Naive thymus-derived CD4-positive, alpha-beta T cell (primary cell): ENCODE measurements at regions of chr10 and their contacts with region 1.

Region 1: DNA sequence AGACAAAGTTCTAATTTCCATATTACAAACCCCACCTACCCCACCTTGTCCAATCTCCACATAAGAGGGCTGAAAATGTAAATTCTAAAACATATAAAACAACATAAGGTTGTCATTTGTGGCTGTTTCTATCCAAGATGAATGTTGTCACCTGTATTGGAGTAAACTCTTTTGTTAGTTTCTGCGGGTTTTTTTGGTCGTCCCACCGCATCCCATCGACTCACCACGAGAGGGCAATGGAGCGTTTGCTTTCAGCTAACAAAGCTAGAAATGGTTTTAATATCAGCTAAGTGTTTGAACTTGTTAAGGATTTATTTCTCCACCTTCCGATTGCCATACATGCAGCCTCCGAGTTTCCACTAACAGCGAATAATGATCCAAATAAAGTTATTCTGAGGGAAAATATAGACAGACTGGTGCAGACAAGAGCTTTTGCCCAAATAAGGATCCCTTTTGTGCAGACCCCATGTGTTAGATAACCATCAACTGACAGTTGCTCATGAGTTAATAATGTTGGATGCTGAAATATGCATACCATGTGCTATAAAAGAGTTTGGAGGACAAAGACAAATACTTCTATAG is 137.2 kb downstream of the ARID5B start:
- DNase-seq: peak; percentile 40 to 84 (median 69)
- ATAC-seq: peak; percentile 87
- H3K4me3 ChIP-seq: peak overlapping the region; percentile 37
- H3K4me3 Mint-ChIP-seq: peak overlapping the region; percentile 64 to 87 (median 72)
- H3K27ac ChIP-seq: peak overlapping the region; percentile 60
- H3K27ac Mint-ChIP-seq: peak overlapping the region; percentile 20 to 94 (median 74)
- H3K4me1 ChIP-seq: peaks cover 16 to 56% of the 10 kb centered on the region in 2 donors
- H3K4me1 Mint-ChIP-seq: peaks cover 48 to 92% (median 86%) of the 10 kb centered on the region in 7 donors
- H3K27me3 ChIP-seq: no peaks in the 10 kb centered on the region
- H3K27me3 Mint-ChIP-seq: no peaks in the 10 kb centered on the region

Region 2: GRCh38 chr10:61992671-61993668 is 45.7 kb before region 1 on chr10:
- CTCF ChIA-PET with region 1: interaction called, 4 read pairs
- POLR2A ChIA-PET with region 1: no interaction called
- intact Hi-C with region 1: loop called in 1 of 2 experiments (anchors 1 kb)
- DNase-seq: peak in 8 of 9 donors; percentile 39 to 85 (median 72)
- ATAC-seq: peak; percentile 90
- H3K4me3 ChIP-seq: peak overlapping the region; percentile 28
- H3K4me3 Mint-ChIP-seq: peak overlapping the region in 9 of 10 donors; percentile 61 to 89 (median 64)
- H3K27ac ChIP-seq: peak overlapping the region; percentile 63
- H3K27ac Mint-ChIP-seq: peak overlapping the region; percentile 82 to 96 (median 93)
- H3K4me1 ChIP-seq: peaks cover 33 to 37% of the 10 kb centered on the region in 2 donors
- H3K4me1 Mint-ChIP-seq: peaks cover 28 to 81% (median 70%) of the 10 kb centered on the region in 7 donors
- H3K27me3 ChIP-seq: no peaks in the 10 kb centered on the region
- H3K27me3 Mint-ChIP-seq: no peaks in the 10 kb centered on the region

Region 3: GRCh38 chr10:62063795-62064472 is 25.2 kb after region 1 on chr10:
- CTCF ChIA-PET with region 1: interaction called, 5 read pairs
- POLR2A ChIA-PET with region 1: interaction called, 4 read pairs
- intact Hi-C with region 1: loop called in 1 of 2 experiments (anchors 2 kb)
- DNase-seq: no peak
- ATAC-seq: no peak
- H3K4me3 ChIP-seq: no peak overlapping the region
- H3K4me3 Mint-ChIP-seq: peak overlapping the region in 4 of 10 donors; percentile 5 to 74 (median 51)
- H3K27ac ChIP-seq: peak overlapping the region; percentile 3
- H3K27ac Mint-ChIP-seq: peak overlapping the region in 8 of 9 donors; percentile 39 to 91 (median 60)
- H3K4me1 ChIP-seq: peaks cover 3 to 21% of the 10 kb centered on the region in 2 donors
- H3K4me1 Mint-ChIP-seq: peaks cover 19 to 88% (median 54%) of the 10 kb centered on the region in 7 donors
- H3K27me3 ChIP-seq: no peaks in the 10 kb centered on the region
- H3K27me3 Mint-ChIP-seq: no peaks in the 10 kb centered on the region

Region 4: DNA sequence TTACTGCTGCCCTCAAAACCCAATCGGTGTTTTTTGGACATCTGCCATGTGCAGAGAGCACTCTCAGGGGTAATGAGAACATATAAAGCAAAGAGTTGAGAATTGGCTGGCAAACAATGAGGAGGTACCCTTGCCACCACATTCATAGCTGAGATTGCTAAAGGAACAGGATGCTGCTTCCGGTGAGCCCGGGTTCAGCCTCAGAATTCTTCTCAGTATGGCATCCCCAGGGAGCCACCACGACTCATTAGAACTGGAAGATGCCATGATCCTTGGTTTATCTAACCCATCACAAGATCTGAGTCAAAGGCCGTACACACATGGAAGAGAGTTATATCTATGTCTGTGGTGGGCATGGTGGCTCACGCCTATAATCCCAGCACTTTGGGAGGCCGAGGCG is 37.2 kb after region 1 on chr10:
- CTCF ChIA-PET with region 1: no interaction called
- POLR2A ChIA-PET with region 1: no interaction called
- intact Hi-C with region 1: no loop called
- DNase-seq: no peak
- ATAC-seq: no peak
- H3K4me3 ChIP-seq: no peak overlapping the region
- H3K4me3 Mint-ChIP-seq: peak overlapping the region in 3 of 10 donors; percentile 24 to 47 (median 34)
- H3K27ac ChIP-seq: no peak overlapping the region
- H3K27ac Mint-ChIP-seq: peak overlapping the region; percentile 38 to 88 (median 65)
- H3K4me1 ChIP-seq: peaks cover 5 to 13% of the 10 kb centered on the region in 2 donors
- H3K4me1 Mint-ChIP-seq: peaks cover 25 to 82% (median 71%) of the 10 kb centered on the region in 7 donors
- H3K27me3 ChIP-seq: no peaks in the 10 kb centered on the region
- H3K27me3 Mint-ChIP-seq: no peaks in the 10 kb centered on the region

Region 5: GRCh38 chr10:62199584-62199983 is 160.9 kb after region 1 on chr10:
- CTCF ChIA-PET with region 1: interaction called, 5 read pairs
- POLR2A ChIA-PET with region 1: no interaction called
- intact Hi-C with region 1: loop called in 1 of 2 experiments (anchors 1 kb)
- DNase-seq: peak in 4 of 9 donors; percentile 22 to 40 (median 28)
- ATAC-seq: peak; percentile 55
- H3K4me3 ChIP-seq: no peak overlapping the region
- H3K4me3 Mint-ChIP-seq: peak overlapping the region in 1 of 10 donors; percentile 56
- H3K27ac ChIP-seq: no peak overlapping the region
- H3K27ac Mint-ChIP-seq: peak overlapping the region in 3 of 9 donors; percentile 32 to 64 (median 51)
- H3K4me1 ChIP-seq: peaks cover 0 to 13% of the 10 kb centered on the region in 2 donors
- H3K4me1 Mint-ChIP-seq: peaks cover 7 to 37% (median 28%) of the 10 kb centered on the region in 7 donors
- H3K27me3 ChIP-seq: no peaks in the 10 kb centered on the region
- H3K27me3 Mint-ChIP-seq: no peaks in the 10 kb centered on the region

Region 6: GRCh38 chr10:62437696-62438095 is 399.0 kb after region 1 on chr10:
- CTCF ChIA-PET with region 1: no interaction called
- POLR2A ChIA-PET with region 1: no interaction called
- intact Hi-C with region 1: loop called in 1 of 2 experiments (anchors 1 kb)
- DNase-seq: peak in 7 of 9 donors; percentile 42 to 71 (median 65)
- ATAC-seq: peak; percentile 79
- H3K4me3 ChIP-seq: no peak overlapping the region
- H3K4me3 Mint-ChIP-seq: no peak overlapping the region
- H3K27ac ChIP-seq: no peak overlapping the region
- H3K27ac Mint-ChIP-seq: no peak overlapping the region
- H3K4me1 ChIP-seq: no peaks in the 10 kb centered on the region
- H3K4me1 Mint-ChIP-seq: peaks cover 0 to 12% (median 3%) of the 10 kb centered on the region in 7 donors
- H3K27me3 ChIP-seq: no peaks in the 10 kb centered on the region
- H3K27me3 Mint-ChIP-seq: peaks cover 0 to 24% (median 4%) of the 10 kb centered on the region in 5 donors

Region 7: DNA sequence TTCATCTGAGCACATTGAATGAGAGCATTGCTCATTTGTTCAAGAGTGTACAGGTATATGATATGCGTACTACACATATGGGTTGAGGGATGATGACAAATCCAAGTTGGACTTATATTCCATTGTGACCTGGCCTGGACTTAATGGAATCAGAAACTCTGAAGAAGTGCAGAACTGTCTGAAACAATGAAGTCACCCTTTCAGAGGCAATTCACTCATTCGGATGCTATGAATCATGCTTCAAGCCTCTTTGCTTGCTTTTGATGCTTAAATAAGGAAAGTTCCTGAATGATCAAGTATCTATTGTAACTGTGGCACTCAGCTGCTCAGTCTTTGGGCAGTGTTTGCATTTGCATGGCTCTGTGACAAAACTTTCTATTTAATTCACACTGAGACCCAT is 428.8 kb after region 1 on chr10:
- CTCF ChIA-PET with region 1: no interaction called
- POLR2A ChIA-PET with region 1: no interaction called
- intact Hi-C with region 1: no loop called
- DNase-seq: no peak
- ATAC-seq: no peak
- H3K4me3 ChIP-seq: no peak overlapping the region
- H3K4me3 Mint-ChIP-seq: no peak overlapping the region
- H3K27ac ChIP-seq: no peak overlapping the region
- H3K27ac Mint-ChIP-seq: no peak overlapping the region
- H3K4me1 ChIP-seq: no peaks in the 10 kb centered on the region
- H3K4me1 Mint-ChIP-seq: no peaks in the 10 kb centered on the region
- H3K27me3 ChIP-seq: no peaks in the 10 kb centered on the region
- H3K27me3 Mint-ChIP-seq: peaks cover 0 to 5% (median 3%) of the 10 kb centered on the region in 5 donors